ENCODE measurements at regions of chr3 and their contacts with region 1.

Region 1: DNA sequence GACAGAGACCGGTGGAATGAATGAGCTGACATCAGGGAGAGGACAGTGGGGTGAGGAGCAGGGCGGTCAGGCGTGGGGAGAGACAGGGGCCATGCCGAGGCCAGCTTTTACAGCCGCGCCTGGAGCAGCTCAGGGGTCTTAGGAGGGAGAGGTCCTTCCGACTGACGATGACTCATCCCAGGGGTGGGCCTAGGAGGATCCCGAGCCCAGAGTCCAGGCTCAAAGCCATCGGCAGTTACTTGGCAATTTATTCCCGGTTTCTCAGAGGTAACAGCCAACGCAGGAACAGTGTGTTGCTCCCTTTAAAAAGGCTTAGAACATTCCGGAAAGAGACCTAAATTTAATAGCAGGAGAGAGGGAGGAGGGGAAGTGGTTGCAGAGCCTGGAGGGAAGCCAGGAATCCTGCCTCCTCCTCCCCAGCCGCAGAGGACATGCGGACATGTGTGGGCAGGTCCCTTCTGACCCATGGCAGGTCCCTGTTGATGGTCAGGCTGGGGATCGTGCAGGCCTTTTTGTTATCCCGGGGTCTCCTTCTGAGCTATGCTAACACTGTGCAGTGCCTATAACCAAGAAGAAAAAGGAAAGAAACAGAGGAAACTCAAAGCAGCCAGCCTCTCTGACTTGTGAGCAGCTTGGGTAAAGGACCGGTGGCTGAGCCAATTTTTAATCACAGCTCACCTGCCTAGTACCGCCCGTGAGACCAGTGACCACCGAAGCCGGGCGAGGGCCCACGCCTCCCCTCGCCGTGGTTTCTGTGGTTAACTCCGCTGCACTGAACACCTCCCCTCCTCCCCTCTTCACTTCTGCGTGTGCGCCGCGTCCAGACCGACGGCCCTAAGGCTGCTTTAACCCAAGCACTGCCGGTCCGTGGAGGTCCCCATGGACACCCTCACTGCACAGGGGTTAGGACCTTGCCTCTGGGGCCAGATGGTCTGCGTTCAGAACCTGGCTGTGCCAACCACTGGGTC is 392.4 kb upstream of the PROK2 start:
- DNase-seq: peak; percentile 35
- ATAC-seq: peak; percentile 20
- H3K4me3 Mint-ChIP-seq: peak overlapping the region; percentile 79
- H3K27ac Mint-ChIP-seq: peak overlapping the region; percentile 75
- H3K4me1 Mint-ChIP-seq: peaks cover 64% of the 10 kb centered on the region
- H3K27me3 Mint-ChIP-seq: peaks cover 2% of the 10 kb centered on the region
- CTCF ChIP-seq: no peak

Region 2: GRCh38 chr3:71905426-71905825 is 271.9 kb before region 1 on chr3:
- CTCF ChIA-PET with region 1: no interaction called
- POLR2A ChIA-PET with region 1: no interaction called
- intact Hi-C with region 1: loop called (anchors 5 kb)
- DNase-seq: no peak
- ATAC-seq: peak; percentile 90
- H3K4me3 Mint-ChIP-seq: peak overlapping the region; percentile 52
- H3K27ac Mint-ChIP-seq: no peak overlapping the region
- H3K4me1 Mint-ChIP-seq: peaks cover 42% of the 10 kb centered on the region
- H3K27me3 Mint-ChIP-seq: peaks cover 73% of the 10 kb centered on the region
- CTCF ChIP-seq: no peak

Region 3: DNA sequence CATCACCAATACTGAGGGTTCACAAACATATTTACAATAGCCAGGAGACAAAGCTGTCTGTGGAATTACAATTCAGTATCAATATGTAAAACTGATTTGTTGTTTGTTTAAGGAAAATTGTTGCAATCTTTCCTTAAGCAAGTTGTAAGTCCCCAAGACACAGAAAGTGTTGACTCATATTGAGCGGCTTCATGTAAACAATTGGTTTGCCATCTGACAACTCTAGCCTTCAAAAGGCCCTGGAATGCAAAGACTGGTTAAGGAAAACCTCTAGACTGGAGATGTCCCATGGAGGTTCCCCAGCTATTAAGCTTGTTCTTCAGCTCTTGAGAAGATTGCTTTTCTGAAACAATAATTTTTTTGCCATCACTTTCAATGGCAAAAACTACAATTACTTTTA is 108.7 kb before region 1 on chr3:
- CTCF ChIA-PET with region 1: no interaction called
- POLR2A ChIA-PET with region 1: no interaction called
- intact Hi-C with region 1: no loop called
- DNase-seq: no peak
- ATAC-seq: no peak
- H3K4me3 Mint-ChIP-seq: no peak overlapping the region
- H3K27ac Mint-ChIP-seq: no peak overlapping the region
- H3K4me1 Mint-ChIP-seq: no peaks in the 10 kb centered on the region
- H3K27me3 Mint-ChIP-seq: peaks cover 17% of the 10 kb centered on the region
- CTCF ChIP-seq: no peak

Region 4: DNA sequence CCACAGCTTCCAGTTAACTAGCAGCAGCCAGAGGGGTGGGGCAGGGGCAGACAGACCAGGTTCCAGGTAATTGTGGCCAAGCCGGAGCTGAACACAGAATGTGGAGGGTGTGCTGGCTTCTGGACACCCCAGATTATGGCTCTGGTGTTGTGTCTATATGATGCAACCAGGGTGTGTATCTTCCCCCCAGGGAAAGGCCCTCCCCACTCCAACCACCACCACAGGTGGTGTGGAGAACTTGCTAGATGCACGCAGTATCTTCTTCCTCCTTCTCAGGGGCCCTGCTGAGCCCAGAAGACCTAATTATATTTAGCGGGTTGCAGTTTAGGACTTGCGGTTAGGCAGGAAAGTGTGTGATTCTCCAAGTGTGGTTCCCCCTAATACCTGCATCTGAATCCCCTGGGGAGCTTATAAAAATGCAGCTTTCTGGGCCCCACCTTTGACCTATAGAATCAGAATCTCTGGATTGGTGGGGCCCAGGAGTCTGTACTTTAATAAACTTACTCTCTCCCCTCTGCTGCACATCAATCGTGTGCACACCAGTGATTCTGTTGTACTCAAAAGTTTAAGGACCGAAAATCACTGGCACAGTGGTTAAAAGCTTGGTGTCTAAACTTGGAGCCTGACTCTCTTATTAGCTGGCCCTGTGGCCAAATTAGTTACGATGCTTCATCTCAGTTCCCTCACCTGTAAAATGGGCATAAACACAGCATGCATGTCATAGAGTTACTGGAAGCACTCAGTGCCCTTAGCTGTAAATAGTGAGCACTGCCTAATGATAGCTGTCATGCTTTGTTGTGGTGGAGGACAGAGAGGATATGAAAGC is 13.3 kb before region 1 on chr3:
- CTCF ChIA-PET with region 1: no interaction called
- POLR2A ChIA-PET with region 1: interaction called, 13 read pairs
- intact Hi-C with region 1: loop called (anchors 1 kb)
- DNase-seq: peak; percentile 53
- ATAC-seq: peak; percentile 87
- H3K4me3 Mint-ChIP-seq: peak overlapping the region; percentile 64
- H3K27ac Mint-ChIP-seq: peak overlapping the region; percentile 81
- H3K4me1 Mint-ChIP-seq: peaks cover 52% of the 10 kb centered on the region
- H3K27me3 Mint-ChIP-seq: peaks cover 2% of the 10 kb centered on the region
- CTCF ChIP-seq: no peak

Region 5: DNA sequence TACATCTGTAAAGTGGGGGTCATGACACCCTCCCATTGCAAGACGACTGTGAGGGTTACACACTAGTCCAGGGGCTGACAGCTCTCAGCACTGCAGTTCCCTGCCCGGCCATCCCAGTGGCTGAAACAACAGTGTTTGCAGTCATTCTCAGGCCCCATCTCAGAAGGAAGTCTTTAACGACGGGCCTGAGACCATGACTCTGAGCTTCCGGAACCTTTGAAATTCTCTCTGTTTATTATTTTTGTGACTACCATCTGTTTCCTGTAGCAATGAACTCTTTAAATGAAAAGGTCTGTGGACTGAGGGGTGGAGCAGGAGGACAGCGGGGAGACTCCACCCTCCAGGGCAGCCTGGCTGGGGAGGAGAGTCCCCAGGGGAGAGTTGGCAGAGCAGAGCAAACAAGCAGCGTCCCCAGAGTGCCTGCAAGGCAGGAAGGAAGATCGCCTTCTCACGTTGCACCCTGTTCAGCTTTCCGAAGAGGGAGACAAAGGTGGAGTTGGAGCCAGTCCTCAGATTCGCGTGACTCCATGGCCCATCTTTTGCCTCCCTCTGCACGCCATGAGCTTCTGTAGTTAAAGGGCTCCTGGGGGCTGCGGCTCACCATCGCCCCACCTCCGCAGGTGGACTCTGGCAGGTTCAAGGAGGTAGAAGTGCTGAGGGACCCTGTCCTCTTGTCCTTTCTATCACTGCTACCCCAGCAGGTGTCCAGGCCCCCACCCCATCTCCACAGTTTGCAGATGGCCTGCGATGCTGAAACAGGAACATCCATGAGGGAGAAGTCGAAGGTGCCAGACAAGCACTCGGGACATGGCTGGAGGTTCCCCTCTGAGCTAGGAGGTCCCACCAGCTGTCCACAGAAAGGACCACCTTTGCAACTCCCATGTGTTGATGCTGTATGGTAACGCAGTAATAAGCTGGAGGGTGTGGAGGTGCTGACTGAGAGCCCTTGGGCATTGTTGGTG is 133.3 kb after region 1 on chr3:
- CTCF ChIA-PET with region 1: no interaction called
- POLR2A ChIA-PET with region 1: no interaction called
- intact Hi-C with region 1: loop called (anchors 2 kb)
- DNase-seq: peak; percentile 45
- ATAC-seq: peak; percentile 98
- H3K4me3 Mint-ChIP-seq: peak overlapping the region; percentile 74
- H3K27ac Mint-ChIP-seq: peak overlapping the region; percentile 76
- H3K4me1 Mint-ChIP-seq: peaks cover 47% of the 10 kb centered on the region
- H3K27me3 Mint-ChIP-seq: no peaks in the 10 kb centered on the region
- CTCF ChIP-seq: no peak

Region 6: GRCh38 chr3:72756900-72757299 is 579.5 kb after region 1 on chr3:
- CTCF ChIA-PET with region 1: no interaction called
- POLR2A ChIA-PET with region 1: no interaction called
- intact Hi-C with region 1: loop called (anchors 5 kb)
- DNase-seq: no peak
- ATAC-seq: peak; percentile 99
- H3K4me3 Mint-ChIP-seq: peak overlapping the region; percentile 67
- H3K27ac Mint-ChIP-seq: no peak overlapping the region
- H3K4me1 Mint-ChIP-seq: peaks cover 32% of the 10 kb centered on the region
- H3K27me3 Mint-ChIP-seq: peaks cover 33% of the 10 kb centered on the region
- CTCF ChIP-seq: no peak

Region 7: DNA sequence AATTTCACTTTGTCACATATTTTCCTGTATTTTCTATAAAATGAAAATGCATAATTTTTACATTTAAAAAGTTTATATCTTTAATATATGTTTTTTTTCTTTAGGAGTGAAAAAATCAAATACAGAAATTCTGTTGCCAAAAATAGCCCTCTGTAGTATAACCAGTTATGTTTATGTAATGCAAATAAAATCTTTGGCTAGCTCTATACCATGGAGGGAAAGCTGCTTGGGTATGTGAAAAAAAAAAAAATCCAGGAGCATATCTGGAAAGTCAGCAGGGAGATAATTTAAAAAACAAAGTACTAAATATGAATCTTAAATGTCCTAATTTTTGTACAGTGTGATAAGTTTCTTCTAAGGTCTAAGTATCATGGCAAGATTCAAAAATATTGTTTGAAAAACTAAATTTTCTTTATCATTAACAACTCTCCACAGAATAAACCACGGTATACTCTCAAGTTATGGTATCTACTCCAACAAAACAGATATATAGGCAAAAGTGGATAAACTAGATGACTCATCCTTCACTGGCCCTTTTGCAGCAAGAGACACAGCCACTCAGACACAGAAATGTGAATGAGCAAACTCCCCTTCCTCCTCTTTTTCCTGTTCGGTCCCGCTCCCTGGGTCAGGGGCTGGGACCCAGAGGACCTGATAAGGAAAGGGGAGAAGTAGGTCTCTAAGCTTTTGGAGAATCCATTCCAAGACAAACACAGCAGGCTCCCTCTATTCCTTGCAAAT is 1380.8 kb after region 1 on chr3:
- CTCF ChIA-PET with region 1: no interaction called
- POLR2A ChIA-PET with region 1: no interaction called
- intact Hi-C with region 1: no loop called
- DNase-seq: no peak
- ATAC-seq: no peak
- H3K4me3 Mint-ChIP-seq: no peak overlapping the region
- H3K27ac Mint-ChIP-seq: no peak overlapping the region
- H3K4me1 Mint-ChIP-seq: no peaks in the 10 kb centered on the region
- H3K27me3 Mint-ChIP-seq: no peaks in the 10 kb centered on the region
- CTCF ChIP-seq: no peak

Measured in activated B cell treated with CpG ODN at 0.5 μM for 24 hours (primary cell).